GM12878 (cell line): ENCODE measurements at regions of chr1 and their contacts with region 1.

Region 1: DNA sequence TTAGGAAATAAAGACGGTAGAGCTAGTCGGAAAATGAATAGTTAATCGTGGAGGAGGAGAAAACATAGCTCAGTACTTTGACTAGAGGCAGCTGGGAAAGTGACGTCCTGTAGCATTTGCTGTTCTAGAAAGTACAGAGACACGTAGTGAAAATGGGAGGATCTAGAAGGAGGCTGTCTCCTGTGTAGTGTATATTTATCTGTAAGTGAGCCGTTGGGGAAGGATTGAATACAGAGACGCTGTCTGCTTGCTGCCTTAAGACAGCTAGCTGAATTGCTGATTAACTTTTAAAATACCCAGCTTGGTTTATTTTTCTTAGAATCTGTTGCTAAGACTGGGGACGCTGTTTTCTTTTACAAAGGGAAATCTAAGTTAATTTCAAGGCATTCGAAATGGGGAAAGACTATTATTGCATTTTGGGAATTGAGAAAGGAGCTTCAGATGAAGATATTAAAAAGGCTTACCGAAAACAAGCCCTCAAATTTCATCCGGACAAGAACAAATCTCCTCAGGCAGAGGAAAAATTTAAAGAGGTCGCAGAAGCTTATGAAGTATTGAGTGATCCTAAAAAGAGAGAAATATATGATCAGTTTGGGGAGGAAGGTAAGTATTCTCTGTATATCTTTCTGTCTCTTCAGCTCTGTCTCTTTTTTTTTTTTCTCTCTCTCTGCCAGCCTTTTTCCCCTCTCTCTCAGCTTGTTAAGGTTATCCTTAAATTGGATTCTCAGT is at the start of gene DNAJB4:
- DNase-seq: peak; percentile 96
- ATAC-seq: peak; percentile 88
- H3K4me3 ChIP-seq: peak within 1 kb of the TSS; percentile 78
- H3K27ac ChIP-seq: peak within 1 kb of the TSS; percentile 94
- H3K4me1 ChIP-seq: no peaks in the 10 kb centered on the region
- H3K27me3 ChIP-seq: no peaks in the 10 kb centered on the region
- CTCF ChIP-seq: no peak
- EP300 ChIP-seq: no peak
- POLR2A ChIP-seq: peak; percentile 72
- RAD21 ChIP-seq: no peak
- polyA plus RNA-seq, gene DNAJB4: 3.8 to 5.1 TPM

Region 2: GRCh38 chr1:77683160-77684148 is 321.4 kb before region 1 on chr1:
- CTCF ChIA-PET with region 1: no interaction called
- POLR2A ChIA-PET with region 1: interaction called, 5 read pairs
- RAD21 ChIA-PET with region 1: no interaction called
- SMC1A ChIA-PET with region 1: no interaction called
- in situ Hi-C with region 1: no loop called
- intact Hi-C with region 1: loop called (anchors 10 kb)
- DNase-seq: peak; percentile 45
- ATAC-seq: peak; percentile 84
- H3K4me3 ChIP-seq: peak overlapping the region; percentile 71
- H3K27ac ChIP-seq: peak overlapping the region; percentile 88
- H3K4me1 ChIP-seq: 0 out of 2 replicates have a peak, but pooled peaks cover 3% of the 10 kb centered on the region
- H3K27me3 ChIP-seq: no peaks in the 10 kb centered on the region
- CTCF ChIP-seq: peak; percentile 77 to 84 (median 80); a peak in 5 of 6 replicates
- EP300 ChIP-seq: no peak
- POLR2A ChIP-seq: peak; percentile 89
- RAD21 ChIP-seq: peak; percentile 47

Region 3: DNA sequence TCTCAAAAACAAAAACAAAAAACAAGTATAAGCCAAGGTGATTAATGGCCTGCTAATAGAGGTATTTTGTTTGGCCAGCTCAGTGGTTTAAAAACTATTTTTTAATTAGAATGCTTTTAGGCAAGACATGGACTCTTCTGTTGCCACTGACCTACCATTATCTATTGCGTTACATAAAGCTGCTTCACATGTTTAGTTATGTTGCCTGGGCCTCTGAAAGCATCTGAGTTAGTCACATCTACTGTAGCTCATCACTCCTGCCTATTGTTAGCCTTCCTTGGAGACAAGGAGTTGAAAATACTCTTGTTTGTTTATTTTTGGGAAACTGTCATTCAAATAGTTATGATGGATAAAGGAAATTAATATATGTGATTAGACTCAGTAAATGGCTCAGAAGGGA is 14.1 kb after region 1 on chr1:
- CTCF ChIA-PET with region 1: interaction called, 4 read pairs
- POLR2A ChIA-PET with region 1: interaction called, 6 read pairs
- RAD21 ChIA-PET with region 1: interaction called, 4 read pairs
- SMC1A ChIA-PET with region 1: interaction called, 12 read pairs
- in situ Hi-C with region 1: no loop called
- intact Hi-C with region 1: loop called (anchors 2 kb)
- DNase-seq: no peak
- ATAC-seq: peak; percentile 22; the same call in 2 of the 3 replicates
- H3K4me3 ChIP-seq: no peak overlapping the region
- H3K27ac ChIP-seq: no peak overlapping the region
- H3K4me1 ChIP-seq: no peaks in the 10 kb centered on the region
- H3K27me3 ChIP-seq: no peaks in the 10 kb centered on the region
- CTCF ChIP-seq: no peak
- EP300 ChIP-seq: no peak
- POLR2A ChIP-seq: no peak
- RAD21 ChIP-seq: no peak

Region 4: DNA sequence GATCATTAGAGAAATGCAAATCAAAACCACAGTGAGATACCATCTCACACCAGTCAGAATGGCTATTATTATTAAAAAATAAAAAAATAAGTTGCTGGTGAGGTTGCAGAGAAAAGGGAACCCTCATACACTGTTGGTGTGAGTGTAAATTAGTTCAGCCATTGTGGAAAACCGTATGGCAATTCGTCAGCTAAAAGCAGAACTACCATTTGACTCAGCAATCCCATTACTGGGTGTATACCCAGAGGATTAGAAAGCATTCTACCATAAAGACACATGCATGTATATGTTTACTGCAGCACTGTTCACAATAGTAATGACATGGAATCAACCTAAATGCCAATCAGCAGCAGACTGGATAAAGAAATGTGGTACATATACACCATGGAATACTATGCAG is 83.1 kb after region 1 on chr1:
- CTCF ChIA-PET with region 1: interaction called, 4 read pairs
- POLR2A ChIA-PET with region 1: no interaction called
- RAD21 ChIA-PET with region 1: no interaction called
- SMC1A ChIA-PET with region 1: no interaction called
- in situ Hi-C with region 1: no loop called
- intact Hi-C with region 1: loop called (anchors 5 kb)
- DNase-seq: peak; percentile 31
- ATAC-seq: peak; percentile 86
- H3K4me3 ChIP-seq: no peak overlapping the region
- H3K27ac ChIP-seq: no peak overlapping the region
- H3K4me1 ChIP-seq: peaks cover 2% of the 10 kb centered on the region; the same call in 1 of the 2 replicates
- H3K27me3 ChIP-seq: no peaks in the 10 kb centered on the region; a peak in 1 of 4 replicates
- CTCF ChIP-seq: no peak
- EP300 ChIP-seq: no peak
- POLR2A ChIP-seq: no peak
- RAD21 ChIP-seq: no peak

Region 5: GRCh38 chr1:78649628-78650027 is 644.7 kb after region 1 on chr1 and contains the start of gene IFI44:
- CTCF ChIA-PET with region 1: no interaction called
- POLR2A ChIA-PET with region 1: interaction called, 6 read pairs
- RAD21 ChIA-PET with region 1: no interaction called
- SMC1A ChIA-PET with region 1: interaction called, 4 read pairs
- in situ Hi-C with region 1: no loop called
- intact Hi-C with region 1: loop called (anchors 5 kb)
- DNase-seq: peak; percentile 75
- ATAC-seq: peak; percentile 72
- H3K4me3 ChIP-seq: peak within 1 kb of the TSS; percentile 95
- H3K27ac ChIP-seq: peak within 1 kb of the TSS; percentile 82
- H3K4me1 ChIP-seq: no peaks in the 10 kb centered on the region
- H3K27me3 ChIP-seq: no peaks in the 10 kb centered on the region
- CTCF ChIP-seq: no peak
- EP300 ChIP-seq: no peak
- POLR2A ChIP-seq: peak; percentile 81
- RAD21 ChIP-seq: no peak
- polyA plus RNA-seq, gene IFI44: 75.6 to 125 TPM